Colonic mucosa (tissue), 4 donors: ENCODE measurements at regions of chr6 and their contacts with region 1.

Region 1: DNA sequence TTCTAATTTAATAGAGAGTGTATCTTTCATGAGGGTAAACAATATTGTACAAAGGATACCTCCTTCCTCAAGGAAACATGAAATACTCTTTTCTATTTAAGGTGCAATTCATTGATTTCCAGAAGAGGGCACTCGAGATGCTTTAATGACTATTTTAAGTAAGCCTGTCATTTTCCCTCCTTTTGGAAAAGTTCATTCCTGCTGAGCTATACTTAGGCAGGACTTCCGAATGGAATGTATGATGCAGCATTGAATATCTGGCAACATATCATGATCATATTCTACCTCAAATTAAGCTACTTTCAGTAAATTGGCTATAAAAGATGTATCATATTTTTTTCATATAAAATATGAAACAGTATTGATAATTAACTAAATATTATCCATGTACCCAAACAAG is 5.0 kb downstream of the DST start:
- DNase-seq: no peak
- H3K4me3 ChIP-seq: no peak overlapping the region
- H3K27ac ChIP-seq: no peak overlapping the region
- H3K4me1 ChIP-seq: no peaks in the 10 kb centered on the region
- H3K27me3 ChIP-seq: no peaks in the 10 kb centered on the region
- CTCF ChIP-seq: peak; percentile 48

Region 2: DNA sequence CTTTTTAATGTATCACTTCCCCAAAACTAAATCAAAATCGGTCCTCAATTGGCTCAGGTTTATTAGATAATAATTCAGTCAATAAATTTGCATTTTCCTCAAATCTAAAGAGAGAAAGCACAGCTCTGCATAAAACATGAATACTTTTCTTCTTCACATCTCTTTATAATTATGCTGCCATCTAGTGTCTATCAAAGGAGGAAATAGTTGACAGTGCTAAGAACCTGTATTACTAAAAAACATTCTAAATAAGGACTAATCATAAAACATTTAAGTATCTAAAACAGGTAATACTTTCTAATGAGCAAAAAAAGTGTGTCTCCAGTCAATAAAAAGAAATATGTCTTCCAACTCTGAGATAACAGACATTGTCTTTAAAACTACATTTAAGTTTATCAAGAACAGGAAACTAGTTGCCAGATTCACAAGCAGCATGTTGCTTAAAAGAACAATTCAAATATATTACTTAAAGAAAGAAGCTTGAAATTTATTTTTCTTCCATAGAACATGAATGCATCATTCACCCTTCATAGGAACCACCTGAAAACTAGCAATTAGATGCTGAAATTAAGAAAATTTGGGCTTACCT is 61.5 kb after region 1 on chr6:
- intact Hi-C with region 1: loop called (anchors 2 kb)
- DNase-seq: no peak
- H3K4me3 ChIP-seq: no peak overlapping the region
- H3K27ac ChIP-seq: no peak overlapping the region
- H3K4me1 ChIP-seq: no peaks in the 10 kb centered on the region
- H3K27me3 ChIP-seq: no peaks in the 10 kb centered on the region
- CTCF ChIP-seq: peak; percentile 43

Region 3: GRCh38 chr6:56764081-56764566 is 126.5 kb after region 1 on chr6:
- intact Hi-C with region 1: loop called (anchors 5 kb)
- DNase-seq: peak; percentile 29
- H3K4me3 ChIP-seq: no peak overlapping the region
- H3K27ac ChIP-seq: no peak overlapping the region
- H3K4me1 ChIP-seq: no peaks in the 10 kb centered on the region
- H3K27me3 ChIP-seq: no peaks in the 10 kb centered on the region
- CTCF ChIP-seq: no peak